Right cardiac atrium (tissue), 5 donors: ENCODE measurements at regions of chr11 and their contacts with region 1.

Region 1: GRCh38 chr11:130861902-130862860 is 54.1 kb downstream of the SNX19 start:
- DNase-seq: peak; percentile 92 to 97 (median 95)
- ATAC-seq: peak; percentile 65 to 84
- H3K4me3 ChIP-seq: no peak overlapping the region
- H3K27ac ChIP-seq: no peak overlapping the region
- H3K4me1 ChIP-seq: peaks cover 4% of the 10 kb centered on the region
- H3K27me3 ChIP-seq: no peaks in the 10 kb centered on the region

Region 2: DNA sequence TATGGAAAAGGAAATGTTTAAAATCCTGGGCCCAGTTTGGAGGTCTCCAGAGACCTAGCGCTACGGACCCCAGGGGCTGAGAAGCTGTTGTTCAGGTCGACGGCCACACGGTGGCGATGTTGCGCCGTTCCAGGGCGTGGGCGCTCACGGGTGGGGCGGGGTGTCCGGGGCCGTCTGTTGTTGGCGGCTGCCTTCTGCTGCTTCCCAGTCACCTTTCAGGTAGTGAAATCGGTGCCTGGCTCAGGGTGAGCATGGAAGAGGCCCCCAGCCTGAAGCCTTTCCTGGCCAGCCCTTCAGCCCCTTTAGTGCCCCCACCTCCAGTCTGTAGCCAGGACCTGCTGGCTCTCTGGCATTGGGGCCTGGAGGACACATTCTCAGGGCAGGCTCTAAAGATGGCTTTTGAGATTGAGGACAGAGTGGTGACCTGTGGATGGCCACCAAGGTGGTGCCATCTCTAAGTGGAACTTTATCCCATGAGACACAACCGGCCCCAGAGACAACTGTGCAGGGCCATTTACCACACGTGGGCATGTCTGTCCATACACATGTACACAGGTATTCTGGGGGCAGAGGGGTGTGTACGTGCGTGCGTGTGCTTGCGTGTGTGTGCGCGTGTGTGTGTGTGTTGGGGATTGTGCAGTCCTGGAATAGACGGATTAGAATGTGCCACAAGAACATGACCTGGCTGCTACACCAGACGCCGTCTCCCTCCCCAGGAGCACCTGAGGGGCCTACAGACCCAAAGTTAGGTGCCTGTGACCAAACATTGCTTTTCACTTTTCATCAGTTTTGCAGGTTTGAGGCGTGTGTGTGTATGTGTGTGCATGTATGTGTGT is 648.8 kb before region 1 on chr11:
- intact Hi-C with region 1: loop called in 1 of 4 experiments (anchors 10 kb)
- DNase-seq: peak; percentile 52 to 85 (median 83)
- ATAC-seq: peak; percentile 54 to 71
- H3K4me3 ChIP-seq: no peak overlapping the region
- H3K27ac ChIP-seq: no peak overlapping the region
- H3K4me1 ChIP-seq: no peaks in the 10 kb centered on the region
- H3K27me3 ChIP-seq: no peaks in the 10 kb centered on the region

Region 3: DNA sequence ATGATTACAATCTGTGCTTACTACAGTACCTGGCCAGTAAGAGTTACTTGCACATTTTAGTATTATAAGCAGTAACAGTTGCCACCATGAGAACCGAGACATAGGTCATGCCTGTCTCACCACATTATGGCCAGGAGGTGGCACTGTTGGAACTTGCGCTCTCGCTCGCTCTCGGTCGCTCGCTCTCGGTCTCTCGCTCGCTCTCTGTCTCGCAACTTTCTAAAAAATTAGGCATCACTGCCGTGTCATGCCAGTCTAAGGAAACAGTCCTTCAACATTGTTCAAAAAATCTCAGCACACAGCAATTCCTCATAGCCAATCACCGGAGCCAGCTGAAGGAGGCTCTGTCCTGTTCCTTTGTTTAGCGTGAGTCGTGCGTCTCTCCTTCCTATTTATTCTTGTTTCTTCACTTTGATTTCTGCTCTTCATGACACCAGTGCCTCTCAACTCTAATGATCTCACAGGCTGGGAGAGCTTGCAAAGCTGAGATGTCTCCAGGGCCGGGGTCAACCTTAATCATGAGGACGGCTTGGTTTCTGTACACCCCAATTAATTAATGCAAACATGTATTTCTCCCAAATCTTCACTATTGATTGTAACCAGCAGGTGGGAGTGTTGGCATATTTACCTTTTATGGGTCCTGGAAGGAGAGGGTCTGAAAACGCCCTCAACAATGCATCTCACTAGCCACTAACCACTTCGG is 427.5 kb before region 1 on chr11:
- intact Hi-C with region 1: loop called (anchors 1 to 5 kb)
- DNase-seq: peak; percentile 76 to 90 (median 82)
- ATAC-seq: peak; percentile 91 to 92
- H3K4me3 ChIP-seq: peak overlapping the region; percentile 84
- H3K27ac ChIP-seq: peak overlapping the region; percentile 73
- H3K4me1 ChIP-seq: peaks cover 2% of the 10 kb centered on the region
- H3K27me3 ChIP-seq: no peaks in the 10 kb centered on the region

Region 4: DNA sequence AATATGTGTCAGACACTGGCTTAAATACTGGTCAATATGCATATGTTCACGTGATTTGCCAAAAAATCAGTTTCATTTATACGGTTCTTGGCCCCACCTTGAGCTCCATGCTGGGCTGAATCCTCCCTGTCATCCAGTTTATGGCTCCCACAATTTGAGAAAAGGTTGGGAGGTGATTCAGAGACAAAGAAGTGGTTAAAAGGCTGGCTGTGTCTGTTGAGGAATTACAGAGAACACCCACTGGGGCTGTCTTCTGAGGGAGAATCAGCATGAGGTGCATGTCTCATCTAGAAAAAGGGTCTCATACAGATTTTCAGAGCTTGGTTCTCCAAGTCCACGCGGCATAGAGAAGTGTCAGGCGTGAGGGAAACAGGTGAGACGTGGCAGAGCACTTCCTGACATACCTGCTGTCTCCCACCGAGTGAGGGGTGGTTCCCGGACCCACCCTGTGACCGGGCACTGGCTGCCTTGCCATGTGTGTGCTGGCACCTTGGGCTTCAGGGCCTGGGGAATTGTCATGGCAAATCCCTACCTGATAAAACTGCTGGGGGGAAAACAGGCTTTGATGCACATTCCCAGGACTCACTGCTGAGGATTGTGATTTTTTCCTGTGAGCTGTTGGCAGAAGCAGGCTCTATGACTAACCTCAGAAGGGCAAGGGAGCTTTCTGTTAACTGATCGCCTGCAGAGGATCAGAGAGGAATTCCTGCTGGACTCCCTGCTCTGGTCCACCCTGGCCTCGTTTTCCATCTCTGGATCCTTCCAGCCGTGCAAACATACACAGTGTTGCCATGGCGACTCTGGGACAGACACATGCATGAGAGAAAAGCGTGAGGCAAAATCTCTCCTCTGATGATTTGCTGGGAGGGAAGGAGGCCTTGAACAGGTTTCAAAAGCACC is 190.1 kb before region 1 on chr11:
- intact Hi-C with region 1: no loop called
- DNase-seq: peak; percentile 85 to 91 (median 89)
- ATAC-seq: peak; percentile 81 to 86
- H3K4me3 ChIP-seq: no peak overlapping the region
- H3K27ac ChIP-seq: peak overlapping the region; percentile 20
- H3K4me1 ChIP-seq: peaks cover 4% of the 10 kb centered on the region
- H3K27me3 ChIP-seq: no peaks in the 10 kb centered on the region

Region 5: DNA sequence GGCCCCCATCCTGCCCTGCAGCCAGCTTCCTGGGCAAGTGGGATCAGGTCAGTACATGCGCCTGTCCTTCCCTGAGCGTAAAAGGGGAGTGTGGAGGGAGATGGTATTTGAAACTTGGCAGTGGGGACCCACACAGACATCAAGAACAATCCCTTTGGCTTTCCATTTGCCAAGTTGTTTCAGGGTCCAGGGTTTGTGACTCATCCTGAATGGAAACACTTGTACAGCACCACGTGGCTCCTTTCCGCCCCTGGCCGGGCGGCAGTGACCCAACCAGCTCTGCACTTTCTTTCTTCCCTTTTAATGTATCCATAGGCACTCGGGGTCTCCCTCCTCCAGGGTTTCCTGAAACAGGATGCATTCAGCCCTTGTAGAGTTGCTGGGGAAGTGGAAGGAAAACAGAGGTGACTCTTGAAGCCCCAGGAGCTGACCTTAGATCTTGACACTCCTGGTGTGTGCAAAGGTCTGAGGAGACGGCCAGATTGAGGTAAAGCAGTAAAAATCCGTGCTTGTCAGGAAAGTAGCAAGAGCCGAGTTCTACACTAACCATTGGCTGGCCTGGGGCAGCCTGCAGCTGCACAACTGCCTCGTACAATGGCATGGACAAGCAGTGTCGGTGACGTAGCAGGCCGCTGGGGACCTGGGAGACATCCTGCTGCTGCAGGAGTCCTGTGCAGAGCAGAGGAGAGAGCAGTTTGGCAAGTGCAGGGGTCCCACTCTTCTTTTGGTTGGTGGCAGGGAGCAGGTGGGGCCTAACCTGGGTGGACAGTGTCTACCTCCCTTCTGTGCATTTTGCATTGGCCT is 135.7 kb before region 1 on chr11:
- intact Hi-C with region 1: loop called in 1 of 4 experiments (anchors 10 kb)
- DNase-seq: peak; percentile 67 to 79 (median 75)
- ATAC-seq: peak; percentile 92
- H3K4me3 ChIP-seq: no peak overlapping the region
- H3K27ac ChIP-seq: peak overlapping the region; percentile 49
- H3K4me1 ChIP-seq: peaks cover 5% of the 10 kb centered on the region
- H3K27me3 ChIP-seq: no peaks in the 10 kb centered on the region

Region 6: GRCh38 chr11:130894322-130895025 is 32.3 kb after region 1 on chr11:
- intact Hi-C with region 1: loop called in 1 of 4 experiments (anchors 2 kb)
- DNase-seq: peak; percentile 64 to 88 (median 74)
- ATAC-seq: peak; percentile 15 to 43
- H3K4me3 ChIP-seq: no peak overlapping the region
- H3K27ac ChIP-seq: no peak overlapping the region
- H3K4me1 ChIP-seq: peaks cover 10% of the 10 kb centered on the region
- H3K27me3 ChIP-seq: no peaks in the 10 kb centered on the region